ENCODE measurements at regions of chr16 and their contacts with region 1.

Region 1: GRCh38 chr16:21989133-21989532 is 11.8 kb downstream of the PDZD9 start:
- DNase-seq: no peak

Region 2: GRCh38 chr16:22077700-22078313 is 88.7 kb after region 1 on chr16:
- in situ Hi-C with region 1: loop called (anchors 25 kb)
- DNase-seq: peak; percentile 55

Measured in ACHN (cell line).